Heart left ventricle (tissue), 16 donors: ENCODE measurements at regions of chr13 and their contacts with region 1.

Region 1: GRCh38 chr13:36395280-36395679 is 37.0 kb upstream of the CCNA1 start:
- DNase-seq: no peak
- ATAC-seq: peak in 3 of 4 donors; percentile 45 to 63 (median 57)
- H3K4me3 ChIP-seq: no peak overlapping the region
- H3K27ac ChIP-seq: no peak overlapping the region
- H3K4me1 ChIP-seq: no peaks in the 10 kb centered on the region
- H3K27me3 ChIP-seq: peaks cover 0 to under 1% (median 0%) of the 10 kb centered on the region in 9 donors
- CTCF ChIP-seq: peak in 11 of 12 donors; percentile 14 to 59 (median 44)
- POLR2A ChIP-seq: no peak

Region 2: DNA sequence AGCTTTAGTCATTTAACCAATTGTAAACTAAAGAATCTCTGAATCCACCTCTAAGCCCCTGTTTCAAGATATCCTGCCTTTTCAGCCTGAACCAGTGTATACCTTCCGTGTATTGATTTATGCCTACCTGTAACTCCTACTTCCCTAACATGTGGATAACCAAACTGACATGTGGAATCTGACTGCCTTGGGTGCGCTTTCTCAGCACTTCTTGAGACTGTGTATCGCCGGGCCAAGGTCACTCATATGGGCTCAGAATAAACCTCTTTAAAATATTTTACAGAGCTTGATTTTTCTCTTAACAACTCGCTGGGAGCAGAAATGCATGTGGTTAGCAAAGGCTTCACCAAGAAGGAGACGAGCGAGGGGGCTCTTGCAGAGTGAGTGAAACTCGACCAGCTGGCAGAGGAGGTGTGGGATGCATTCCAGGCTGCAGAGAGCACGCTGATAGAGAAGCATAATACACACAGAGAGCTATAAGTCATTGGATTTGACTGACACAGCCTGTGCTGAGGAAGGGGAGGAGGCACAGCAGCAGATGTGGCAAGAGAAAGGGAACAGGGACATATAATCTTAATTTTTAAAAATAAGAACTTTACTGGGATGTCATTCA is 650.6 kb before region 1 on chr13:
- intact Hi-C with region 1: no loop called
- DNase-seq: no peak
- ATAC-seq: peak in 3 of 4 donors; percentile 62 to 84 (median 71)
- H3K4me3 ChIP-seq: no peak overlapping the region
- H3K27ac ChIP-seq: no peak overlapping the region
- H3K4me1 ChIP-seq: peaks cover 0 to 15% (median 0%) of the 10 kb centered on the region in 12 donors
- H3K27me3 ChIP-seq: no peaks in the 10 kb centered on the region
- CTCF ChIP-seq: no peak
- POLR2A ChIP-seq: no peak

Region 3: DNA sequence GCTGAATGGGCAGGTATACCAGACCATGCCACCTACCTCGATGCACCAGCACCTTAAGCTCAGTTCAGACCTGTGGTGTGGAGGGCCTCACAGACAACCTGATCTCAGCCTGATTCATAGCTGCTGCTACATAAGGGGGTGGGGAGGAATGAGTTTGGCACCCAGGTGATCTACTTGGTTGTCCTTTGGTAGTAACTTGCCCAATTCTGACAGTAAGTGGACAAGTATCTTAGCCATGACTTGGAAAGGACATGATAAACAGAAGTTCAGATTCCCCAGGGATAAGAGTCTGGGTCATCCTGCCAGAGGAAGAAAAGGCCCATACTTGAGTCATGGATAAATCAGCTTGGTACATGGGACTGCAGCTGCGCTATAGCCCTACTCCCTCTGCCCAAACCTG is 152.5 kb before region 1 on chr13:
- intact Hi-C with region 1: no loop called
- DNase-seq: no peak
- ATAC-seq: no peak
- H3K4me3 ChIP-seq: no peak overlapping the region
- H3K27ac ChIP-seq: no peak overlapping the region
- H3K4me1 ChIP-seq: no peaks in the 10 kb centered on the region
- H3K27me3 ChIP-seq: no peaks in the 10 kb centered on the region
- CTCF ChIP-seq: no peak
- POLR2A ChIP-seq: no peak

Region 4: GRCh38 chr13:36282818-36283445 is 112.3 kb before region 1 on chr13:
- intact Hi-C with region 1: loop called in 7 of 10 experiments (anchors 5 to 10 kb)
- DNase-seq: no peak
- ATAC-seq: peak in 1 of 4 donors; percentile 36
- H3K4me3 ChIP-seq: no peak overlapping the region
- H3K27ac ChIP-seq: no peak overlapping the region
- H3K4me1 ChIP-seq: no peaks in the 10 kb centered on the region
- H3K27me3 ChIP-seq: no peaks in the 10 kb centered on the region
- CTCF ChIP-seq: peak; percentile 71 to 90 (median 78)
- POLR2A ChIP-seq: no peak

Region 5: DNA sequence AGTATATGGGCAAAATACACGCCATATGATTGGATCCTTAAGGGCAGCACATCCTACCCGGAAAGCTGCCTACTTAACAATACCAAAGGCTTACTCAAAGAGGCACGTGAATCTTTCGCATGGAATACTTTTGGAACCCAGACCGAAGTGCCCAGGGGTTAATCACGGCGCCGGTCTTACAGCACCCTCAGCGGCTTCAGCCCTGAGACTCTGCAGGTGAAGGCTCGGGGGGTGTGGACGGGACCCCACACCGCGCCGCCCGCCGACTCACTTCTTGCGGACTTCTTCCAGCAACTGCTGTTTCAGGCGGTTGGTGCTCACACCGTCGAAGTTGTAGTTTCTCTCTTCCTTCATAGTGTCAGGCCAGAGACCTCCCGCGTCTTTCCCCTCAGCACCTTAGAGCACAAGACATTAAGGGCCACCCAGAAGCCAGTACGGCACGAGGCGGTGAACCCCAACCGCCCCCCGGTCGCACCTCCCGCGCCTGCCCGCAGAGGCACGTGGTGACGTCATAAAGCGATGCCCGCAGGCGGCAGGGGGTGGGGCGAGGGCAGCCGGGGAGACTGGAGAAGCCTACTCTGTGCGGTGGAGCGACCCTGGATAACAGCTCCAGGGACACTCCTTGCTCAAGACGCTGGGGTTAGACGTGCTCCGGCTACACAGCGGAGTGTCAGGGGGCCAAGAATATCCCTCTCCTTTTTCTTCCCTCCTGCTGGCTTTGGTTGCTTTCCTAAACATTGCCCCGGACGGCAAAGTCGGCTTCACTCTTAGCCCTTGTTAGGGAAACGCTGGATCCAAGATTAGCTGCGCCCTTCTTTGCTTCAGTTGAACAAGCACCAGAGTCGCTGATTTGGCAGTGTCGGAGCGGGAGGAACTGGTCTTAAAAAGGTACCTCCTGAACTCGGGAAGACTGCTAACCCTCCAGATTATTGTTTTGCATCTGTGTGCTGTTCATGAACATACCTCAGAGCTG is 97.6 kb before region 1 on chr13 and contains the start of gene CCDC169:
- intact Hi-C with region 1: loop called in 1 of 10 experiments (anchors 5 kb)
- DNase-seq: peak; percentile 61 to 87 (median 73)
- ATAC-seq: peak; percentile 50 to 95 (median 94)
- H3K4me3 ChIP-seq: peak within 1 kb of the TSS; percentile 24 to 72 (median 60)
- H3K27ac ChIP-seq: peak within 1 kb of the TSS in 8 of 12 donors; percentile 2 to 85 (median 30)
- H3K4me1 ChIP-seq: peaks cover 0 to 16% (median 8%) of the 10 kb centered on the region in 12 donors
- H3K27me3 ChIP-seq: no peaks in the 10 kb centered on the region
- CTCF ChIP-seq: no peak
- POLR2A ChIP-seq: no peak
- total RNA-seq, gene CCDC169: 0.20 to 5.7 (median 1.4) TPM

Region 6: DNA sequence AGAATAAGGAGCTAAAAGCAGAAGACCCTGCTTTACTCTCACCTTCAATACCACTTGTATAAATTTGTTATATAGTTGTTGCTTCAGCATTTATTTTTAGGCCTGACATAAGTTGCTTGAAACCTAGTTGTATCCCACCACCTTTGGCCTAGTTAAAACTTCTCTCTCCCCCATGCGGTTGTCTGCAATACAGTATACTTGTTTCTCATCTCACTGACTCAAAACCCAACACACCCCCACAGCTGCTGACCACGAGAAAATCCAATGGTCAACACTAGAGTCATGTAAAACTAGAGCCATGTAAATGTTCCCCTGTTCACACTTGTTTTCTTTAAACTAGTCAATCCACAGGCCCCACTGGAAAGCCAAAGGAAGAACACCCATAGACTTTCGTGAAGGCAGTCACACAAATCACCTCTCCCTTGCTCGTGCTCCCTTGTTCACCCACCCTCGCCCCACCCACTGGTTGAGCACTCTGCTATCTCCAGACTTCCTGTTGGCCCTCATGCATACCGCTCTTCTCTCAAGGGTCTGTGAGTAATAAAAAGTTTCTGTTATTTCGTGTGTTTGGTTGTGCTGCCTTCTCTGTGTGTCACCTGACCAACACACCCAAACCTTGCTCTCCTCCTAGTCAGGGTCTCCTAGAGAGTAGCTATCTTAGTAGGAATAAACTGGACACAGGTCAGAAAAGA is 84.7 kb before region 1 on chr13:
- intact Hi-C with region 1: no loop called
- DNase-seq: no peak
- ATAC-seq: peak in 1 of 4 donors; percentile 49
- H3K4me3 ChIP-seq: no peak overlapping the region
- H3K27ac ChIP-seq: no peak overlapping the region
- H3K4me1 ChIP-seq: peaks cover 0 to 4% (median 0%) of the 10 kb centered on the region in 12 donors
- H3K27me3 ChIP-seq: no peaks in the 10 kb centered on the region
- CTCF ChIP-seq: no peak
- POLR2A ChIP-seq: no peak

Region 7: DNA sequence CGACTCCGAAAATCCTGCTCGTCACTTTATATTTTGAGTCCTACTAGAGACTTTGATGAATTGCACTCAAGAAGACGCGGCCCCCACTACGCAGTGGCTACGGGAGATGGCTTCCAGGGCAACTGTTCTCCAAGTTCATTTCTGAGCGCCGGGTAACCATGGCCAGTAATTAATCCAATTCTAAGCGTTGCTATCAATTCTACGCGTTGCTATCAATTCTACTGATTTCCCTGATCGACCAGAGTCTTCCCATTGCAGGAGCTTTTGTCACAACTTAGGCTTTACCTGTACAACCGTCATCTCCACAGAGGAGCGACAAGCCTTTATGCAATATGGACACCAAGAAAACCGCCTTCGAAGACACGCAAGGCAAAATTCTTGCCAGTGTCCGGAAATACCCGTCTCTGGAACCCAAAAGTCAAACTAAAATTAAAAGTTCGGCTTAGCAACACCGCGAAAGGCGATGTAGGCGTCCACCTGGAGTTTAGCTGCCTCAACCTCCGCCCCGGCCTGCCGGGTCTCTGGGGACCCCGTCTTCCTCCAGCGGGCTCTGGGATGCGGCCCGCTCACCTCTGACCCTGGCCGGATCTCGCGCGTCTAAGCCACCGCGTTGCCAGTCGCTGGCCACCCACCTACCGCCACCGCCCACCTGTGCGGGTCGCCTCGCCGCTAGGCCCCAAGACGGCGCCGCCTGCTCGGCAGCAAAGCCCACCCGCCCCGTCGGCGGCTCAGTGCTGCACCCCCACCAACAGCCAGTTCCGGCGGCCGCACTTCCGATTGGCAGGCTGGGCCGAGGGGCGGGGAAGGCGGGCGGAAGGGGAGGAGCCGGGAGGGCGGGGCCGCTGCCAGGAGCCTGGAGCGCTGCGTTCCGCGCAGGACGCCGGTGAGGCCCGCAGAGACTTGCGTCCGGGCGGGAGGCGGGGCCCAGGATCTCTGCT is 663.9 kb after region 1 on chr13 and contains the start of gene SUPT20H:
- intact Hi-C with region 1: no loop called
- DNase-seq: peak; percentile 94 to 97 (median 95)
- ATAC-seq: peak; percentile 95 to 100 (median 99)
- H3K4me3 ChIP-seq: peak within 1 kb of the TSS; percentile 66 to 97 (median 86)
- H3K27ac ChIP-seq: peak within 1 kb of the TSS; percentile 75 to 96 (median 92)
- H3K4me1 ChIP-seq: peaks cover 0 to 24% (median 14%) of the 10 kb centered on the region in 12 donors
- H3K27me3 ChIP-seq: no peaks in the 10 kb centered on the region
- CTCF ChIP-seq: peak in 1 of 12 donors; percentile 9
- POLR2A ChIP-seq: peak in 1 of 2 donors; percentile 86
- total RNA-seq, gene SUPT20H: 19.0 to 32.8 (median 26.5) TPM